ENCODE measurements at regions of chrX and their contacts with region 1.

Region 1: DNA sequence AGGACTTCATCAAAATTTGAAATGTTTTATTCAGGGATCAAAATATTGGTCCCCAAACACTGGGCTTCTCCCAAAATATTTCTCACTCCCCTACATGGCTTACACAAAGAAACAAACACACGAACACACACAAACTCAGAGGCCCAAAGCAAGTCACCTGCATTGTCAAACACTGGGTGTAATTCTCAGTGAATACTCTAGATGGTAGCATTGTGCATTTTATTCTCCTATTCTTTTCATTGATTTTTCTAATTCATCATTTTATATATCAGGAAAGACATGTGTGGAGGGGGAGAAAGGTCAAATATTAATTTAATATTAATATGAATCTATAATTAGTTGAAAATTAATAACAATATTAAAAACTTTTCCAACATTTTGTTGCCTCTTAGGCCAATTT is 72.3 kb upstream of the TNMD start:
- DNase-seq: peak; percentile 1
- ATAC-seq: peak; percentile 72
- H3K4me3 ChIP-seq: no peak overlapping the region
- H3K27ac ChIP-seq: no peak overlapping the region
- H3K4me1 ChIP-seq: no peaks in the 10 kb centered on the region
- H3K27me3 ChIP-seq: 0 out of 2 replicates have a peak, but pooled peaks cover 1% of the 10 kb centered on the region
- CTCF ChIP-seq: peak; percentile 51
- POLR2A ChIP-seq: no peak
- RAD21 ChIP-seq: peak; percentile 48

Region 2: GRCh38 chrX:100098660-100099375 is 413.7 kb before region 1 on chrX:
- CTCF ChIA-PET with region 1: no interaction called
- POLR2A ChIA-PET with region 1: no interaction called
- dilution Hi-C with region 1: no loop called
- in situ Hi-C with region 1: no loop called
- intact Hi-C with region 1: no loop called
- DNase-seq: no peak
- ATAC-seq: no peak
- H3K4me3 ChIP-seq: no peak overlapping the region
- H3K27ac ChIP-seq: no peak overlapping the region
- H3K4me1 ChIP-seq: no peaks in the 10 kb centered on the region
- H3K27me3 ChIP-seq: no peaks in the 10 kb centered on the region
- CTCF ChIP-seq: no peak
- POLR2A ChIP-seq: no peak
- RAD21 ChIP-seq: no peak

Region 3: GRCh38 chrX:100491174-100491573 is 21.3 kb before region 1 on chrX:
- CTCF ChIA-PET with region 1: no interaction called
- POLR2A ChIA-PET with region 1: no interaction called
- dilution Hi-C with region 1: no loop called
- in situ Hi-C with region 1: no loop called
- intact Hi-C with region 1: no loop called
- DNase-seq: no peak
- ATAC-seq: no peak
- H3K4me3 ChIP-seq: no peak overlapping the region
- H3K27ac ChIP-seq: no peak overlapping the region
- H3K4me1 ChIP-seq: no peaks in the 10 kb centered on the region
- H3K27me3 ChIP-seq: peaks cover 1% of the 10 kb centered on the region; the same call in 1 of the 2 replicates
- CTCF ChIP-seq: no peak
- POLR2A ChIP-seq: no peak
- RAD21 ChIP-seq: no peak

Region 4: GRCh38 chrX:100615005-100615404 is 102.5 kb after region 1 on chrX:
- CTCF ChIA-PET with region 1: no interaction called
- POLR2A ChIA-PET with region 1: no interaction called
- dilution Hi-C with region 1: no loop called
- in situ Hi-C with region 1: no loop called
- intact Hi-C with region 1: loop called (anchors 10 kb)
- DNase-seq: peak; percentile 68
- ATAC-seq: peak; percentile 89
- H3K4me3 ChIP-seq: no peak overlapping the region
- H3K27ac ChIP-seq: no peak overlapping the region
- H3K4me1 ChIP-seq: no peaks in the 10 kb centered on the region
- H3K27me3 ChIP-seq: no peaks in the 10 kb centered on the region; the same call in 1 of the 2 replicates
- CTCF ChIP-seq: peak; percentile 64
- POLR2A ChIP-seq: no peak
- RAD21 ChIP-seq: peak; percentile 47

Region 5: DNA sequence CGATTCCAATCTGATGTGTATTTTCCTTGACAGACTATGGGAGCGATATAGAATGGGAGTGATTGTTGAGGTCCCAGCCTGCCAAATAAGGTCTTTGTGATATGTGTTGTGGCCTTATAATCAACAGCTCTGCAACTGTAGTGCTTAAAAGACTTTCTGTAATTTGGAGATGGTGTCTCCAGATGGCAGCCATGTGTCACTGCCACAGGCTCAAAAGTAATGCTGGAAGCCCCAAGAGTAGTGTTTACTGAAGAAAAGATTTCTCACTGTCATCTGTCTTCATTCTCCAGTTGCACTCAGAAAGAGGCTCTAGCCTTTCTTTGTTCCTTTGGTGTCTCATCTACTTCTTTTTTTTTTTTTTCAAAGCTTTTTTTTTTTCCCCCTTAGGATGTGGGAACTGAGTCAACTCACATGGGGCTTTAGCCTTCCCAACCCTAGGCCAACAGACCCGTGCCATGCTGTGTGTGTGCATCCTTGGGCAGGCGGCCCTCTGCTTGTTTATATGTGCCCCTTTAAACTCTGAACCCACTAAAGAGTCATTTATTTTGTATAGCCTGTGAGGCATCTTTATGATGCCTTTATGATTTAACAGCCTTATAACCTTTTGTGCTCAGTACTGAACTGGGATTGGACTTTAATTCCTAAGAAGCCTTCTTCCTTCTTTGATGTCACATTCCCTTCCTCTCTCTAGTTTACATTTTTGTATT is 147.1 kb after region 1 on chrX:
- CTCF ChIA-PET with region 1: no interaction called
- POLR2A ChIA-PET with region 1: no interaction called
- dilution Hi-C with region 1: no loop called
- in situ Hi-C with region 1: no loop called
- intact Hi-C with region 1: loop called (anchors 5 kb)
- DNase-seq: no peak
- ATAC-seq: peak; percentile 59
- H3K4me3 ChIP-seq: no peak overlapping the region
- H3K27ac ChIP-seq: peak overlapping the region; percentile 58; the same call in 1 of the 2 replicates
- H3K4me1 ChIP-seq: peaks cover 4% of the 10 kb centered on the region
- H3K27me3 ChIP-seq: no peaks in the 10 kb centered on the region; the same call in 1 of the 2 replicates
- CTCF ChIP-seq: no peak
- POLR2A ChIP-seq: no peak
- RAD21 ChIP-seq: no peak

Region 6: GRCh38 chrX:100674705-100675104 is 162.2 kb after region 1 on chrX:
- CTCF ChIA-PET with region 1: interaction called, 5 read pairs
- POLR2A ChIA-PET with region 1: no interaction called
- dilution Hi-C with region 1: no loop called
- in situ Hi-C with region 1: no loop called
- intact Hi-C with region 1: loop called (anchors 1 kb)
- DNase-seq: no peak
- ATAC-seq: no peak
- H3K4me3 ChIP-seq: no peak overlapping the region
- H3K27ac ChIP-seq: no peak overlapping the region
- H3K4me1 ChIP-seq: peaks cover 5% of the 10 kb centered on the region
- H3K27me3 ChIP-seq: no peaks in the 10 kb centered on the region; the same call in 1 of the 2 replicates
- CTCF ChIP-seq: no peak
- POLR2A ChIP-seq: no peak
- RAD21 ChIP-seq: no peak

Region 7: GRCh38 chrX:100685284-100685996 is 173.0 kb after region 1 on chrX:
- CTCF ChIA-PET with region 1: interaction called, 8 read pairs
- POLR2A ChIA-PET with region 1: no interaction called
- dilution Hi-C with region 1: no loop called
- in situ Hi-C with region 1: no loop called
- intact Hi-C with region 1: loop called (anchors 5 kb)
- DNase-seq: peak; percentile 75
- ATAC-seq: peak; percentile 90
- H3K4me3 ChIP-seq: no peak overlapping the region
- H3K27ac ChIP-seq: no peak overlapping the region
- H3K4me1 ChIP-seq: peaks cover 2% of the 10 kb centered on the region
- H3K27me3 ChIP-seq: no peaks in the 10 kb centered on the region; the same call in 1 of the 2 replicates
- CTCF ChIP-seq: peak; percentile 96
- POLR2A ChIP-seq: no peak
- RAD21 ChIP-seq: peak; percentile 81

Region 8: DNA sequence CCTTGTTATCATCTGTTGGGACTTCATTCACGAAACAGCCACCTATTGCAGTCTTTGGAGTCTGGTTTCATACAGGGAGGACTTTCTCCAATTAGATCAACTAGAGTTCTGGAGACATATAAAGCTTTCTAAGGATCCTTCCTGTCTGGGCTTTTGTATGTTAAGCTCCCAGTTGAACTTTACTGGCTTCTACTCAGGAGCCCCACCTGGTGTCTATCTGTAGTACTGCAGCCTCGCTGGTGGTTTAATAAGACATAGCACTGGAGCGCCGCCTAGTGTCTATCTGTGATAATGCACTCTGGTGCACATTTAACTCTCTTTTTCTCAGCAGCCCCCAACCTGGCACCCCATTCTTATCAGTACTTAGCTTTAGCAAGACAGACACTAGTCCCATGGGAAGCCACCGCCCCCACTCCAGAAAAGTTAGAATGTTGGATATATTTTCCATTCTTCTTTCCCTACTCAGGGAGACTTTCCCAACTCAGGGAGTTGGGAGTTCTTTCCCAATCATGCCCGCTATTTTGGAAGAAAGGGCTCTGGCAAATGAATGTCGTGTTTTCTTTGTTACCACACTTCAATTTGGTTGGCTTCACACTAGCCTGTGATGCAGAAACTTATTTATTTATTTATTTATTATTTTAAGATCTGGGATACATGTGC is 256.3 kb after region 1 on chrX:
- CTCF ChIA-PET with region 1: interaction called, 6 read pairs
- POLR2A ChIA-PET with region 1: no interaction called
- dilution Hi-C with region 1: no loop called
- in situ Hi-C with region 1: loop called (anchors 10 kb)
- intact Hi-C with region 1: loop called (anchors 1 kb)
- DNase-seq: peak; percentile 62
- ATAC-seq: peak; percentile 99
- H3K4me3 ChIP-seq: no peak overlapping the region
- H3K27ac ChIP-seq: no peak overlapping the region
- H3K4me1 ChIP-seq: no peaks in the 10 kb centered on the region
- H3K27me3 ChIP-seq: peaks cover 2% of the 10 kb centered on the region
- CTCF ChIP-seq: peak; percentile 100
- POLR2A ChIP-seq: no peak
- RAD21 ChIP-seq: peak; percentile 94